Calu3 (cell line): ENCODE measurements at regions of chr5 and their contacts with region 1.

Region 1: DNA sequence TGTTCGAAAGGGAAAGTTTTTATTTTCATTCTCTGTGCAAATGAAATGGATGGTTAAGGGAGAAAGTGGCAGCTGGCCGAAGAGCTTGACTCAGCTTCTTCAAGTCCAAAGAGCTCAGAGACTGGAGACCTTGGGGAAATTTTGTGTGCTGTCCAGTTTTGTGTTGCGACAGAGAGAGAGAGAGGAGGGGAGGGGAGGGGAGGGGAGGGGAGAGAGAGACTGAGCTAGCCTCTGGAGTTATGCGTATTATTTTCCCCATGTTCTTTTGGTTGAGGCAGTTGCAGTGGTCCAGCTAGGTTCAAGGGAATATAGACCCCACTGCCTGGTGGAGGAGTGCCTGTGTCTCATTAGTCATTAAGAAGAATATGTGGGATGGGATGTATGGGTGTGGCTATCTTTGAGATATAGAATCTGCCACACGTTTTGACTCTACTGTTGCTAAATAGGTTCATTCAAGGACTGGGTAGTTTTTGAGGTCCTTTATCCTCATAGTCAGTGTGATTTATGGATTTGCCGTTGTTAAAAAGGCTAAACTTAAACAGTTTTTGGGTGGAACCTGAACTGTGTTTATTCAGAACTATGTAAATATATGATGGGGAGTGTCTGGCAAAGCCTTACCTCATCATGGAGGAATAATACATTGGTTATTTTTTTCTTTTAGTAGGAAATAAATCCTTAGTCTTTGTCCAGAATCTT is 69.7 kb downstream of the ARHGAP26 start:
- DNase-seq: no peak
- H3K4me3 Mint-ChIP-seq: no peak overlapping the region
- H3K27ac Mint-ChIP-seq: peak overlapping the region; percentile 52
- H3K4me1 Mint-ChIP-seq: peaks cover 84% of the 10 kb centered on the region
- H3K27me3 Mint-ChIP-seq: no peaks in the 10 kb centered on the region
- CTCF ChIP-seq: no peak

Region 2: GRCh38 chr5:142826741-142827732 is 12.8 kb before region 1 on chr5:
- CTCF ChIA-PET with region 1: interaction called, 12 read pairs
- intact Hi-C with region 1: no loop called
- DNase-seq: peak; percentile 79
- H3K4me3 Mint-ChIP-seq: peak overlapping the region; percentile 69
- H3K27ac Mint-ChIP-seq: peak overlapping the region; percentile 87
- H3K4me1 Mint-ChIP-seq: peaks cover 95% of the 10 kb centered on the region
- H3K27me3 Mint-ChIP-seq: no peaks in the 10 kb centered on the region
- CTCF ChIP-seq: no peak